Activated naive CD4-positive, alpha-beta T cell treated with anti-CD3 and anti-CD28 coated beads for 36 hours (primary cell): ENCODE measurements at regions of chr16 and their contacts with region 1.

Region 1: GRCh38 chr16:88662843-88663606 is at the start of gene MVD:
- DNase-seq: peak; percentile 97
- H3K4me3 Mint-ChIP-seq: peak within 1 kb of the TSS; percentile 90
- H3K27ac Mint-ChIP-seq: peak within 1 kb of the TSS; percentile 86
- H3K4me1 Mint-ChIP-seq: peaks cover 13% of the 10 kb centered on the region
- H3K27me3 Mint-ChIP-seq: no peaks in the 10 kb centered on the region
- total RNA-seq, gene MVD: 90.5 to 96.8 TPM

Region 2: DNA sequence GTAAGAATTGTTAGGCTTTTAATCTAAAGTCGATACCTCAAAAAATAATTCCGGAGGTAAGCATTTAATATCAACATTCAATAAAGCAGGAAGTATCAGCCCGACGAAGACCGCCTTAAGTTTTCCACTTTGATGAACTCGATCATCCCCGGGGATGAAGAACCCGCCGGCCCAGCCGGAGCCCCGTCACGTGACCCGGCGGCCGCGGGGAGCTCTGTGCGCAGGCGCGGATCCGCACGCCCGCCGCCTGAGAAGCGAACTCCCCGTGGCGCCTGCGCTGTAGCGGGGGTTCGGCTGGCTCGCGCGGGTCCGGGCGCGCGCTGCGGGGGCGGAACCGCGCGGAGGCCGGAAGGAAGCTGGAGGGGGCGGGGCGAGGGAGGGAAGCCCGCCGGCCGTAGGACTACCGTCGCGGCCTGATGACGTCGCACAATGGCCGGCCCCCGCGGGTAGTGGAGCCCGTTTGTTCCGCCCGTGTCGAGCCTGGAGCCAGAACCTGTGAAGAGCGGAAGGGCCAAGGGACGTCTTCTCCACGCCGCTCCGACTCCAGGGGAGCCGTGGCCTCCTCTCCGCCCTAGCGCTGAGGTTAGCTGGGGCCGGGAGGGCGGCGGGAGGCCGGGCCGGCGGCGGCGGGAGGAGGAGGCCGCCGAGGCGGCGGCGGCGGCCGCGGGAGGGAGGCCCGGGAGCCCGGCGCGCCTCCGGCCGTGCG is 92.9 kb before region 1 on chr16 and contains the start of gene ZC3H18:
- CTCF ChIA-PET with region 1: no interaction called
- intact Hi-C with region 1: loop called (anchors 1 kb)
- DNase-seq: peak; percentile 97
- H3K4me3 Mint-ChIP-seq: peak within 1 kb of the TSS; percentile 81
- H3K27ac Mint-ChIP-seq: peak within 1 kb of the TSS; percentile 84
- H3K4me1 Mint-ChIP-seq: peaks cover 41% of the 10 kb centered on the region
- H3K27me3 Mint-ChIP-seq: no peaks in the 10 kb centered on the region
- total RNA-seq, gene ZC3H18: 55.8 to 58.5 TPM

Region 3: GRCh38 chr16:88700636-88701482 is 37.8 kb after region 1 on chr16:
- CTCF ChIA-PET with region 1: no interaction called
- intact Hi-C with region 1: loop called (anchors 1 kb)
- DNase-seq: peak; percentile 98
- H3K4me3 Mint-ChIP-seq: peak overlapping the region; percentile 84
- H3K27ac Mint-ChIP-seq: peak overlapping the region; percentile 98
- H3K4me1 Mint-ChIP-seq: peaks cover 71% of the 10 kb centered on the region
- H3K27me3 Mint-ChIP-seq: no peaks in the 10 kb centered on the region